Heart right ventricle (tissue), 16 donors: ENCODE measurements at regions of chr18 and their contacts with region 1.

Region 1: DNA sequence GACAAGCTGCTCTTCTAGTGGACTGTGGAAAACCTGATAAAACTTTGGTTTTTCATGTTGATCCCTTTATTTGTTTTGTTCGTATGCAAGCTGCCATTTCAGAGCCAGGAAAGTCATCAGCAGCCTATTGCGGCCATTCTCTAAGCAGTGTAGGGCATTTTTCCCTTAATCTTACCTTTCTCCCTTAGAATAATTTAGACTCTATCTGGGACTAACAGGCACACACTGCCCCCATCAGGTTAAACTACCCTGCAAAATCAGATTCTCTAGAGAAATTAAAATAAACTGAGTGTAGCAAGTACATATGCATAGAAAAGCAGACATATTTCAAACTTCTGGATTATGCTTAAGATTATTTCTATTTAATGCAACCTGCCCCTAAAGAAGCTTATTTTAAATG is 347.5 kb downstream of the METTL4 start:
- DNase-seq: peak in 1 of 2 donors; percentile 26
- ATAC-seq: peak in 1 of 8 donors; percentile 51
- H3K4me3 ChIP-seq: peak overlapping the region in 6 of 10 donors; percentile 6 to 40 (median 29)
- H3K27ac ChIP-seq: no peak overlapping the region
- H3K4me1 ChIP-seq: no peaks in the 10 kb centered on the region
- H3K27me3 ChIP-seq: peaks cover 0 to 7% (median 0%) of the 10 kb centered on the region in 7 donors
- CTCF ChIP-seq: peak; percentile 23 to 70 (median 58)

Region 2: GRCh38 chr18:2111456-2111855 is 112.4 kb before region 1 on chr18:
- intact Hi-C with region 1: loop called in 6 of 10 experiments (anchors 5 to 10 kb)
- DNase-seq: no peak
- ATAC-seq: no peak
- H3K4me3 ChIP-seq: no peak overlapping the region
- H3K27ac ChIP-seq: no peak overlapping the region
- H3K4me1 ChIP-seq: no peaks in the 10 kb centered on the region
- H3K27me3 ChIP-seq: peaks cover 0 to 14% (median 0%) of the 10 kb centered on the region in 7 donors
- CTCF ChIP-seq: no peak

Region 3: DNA sequence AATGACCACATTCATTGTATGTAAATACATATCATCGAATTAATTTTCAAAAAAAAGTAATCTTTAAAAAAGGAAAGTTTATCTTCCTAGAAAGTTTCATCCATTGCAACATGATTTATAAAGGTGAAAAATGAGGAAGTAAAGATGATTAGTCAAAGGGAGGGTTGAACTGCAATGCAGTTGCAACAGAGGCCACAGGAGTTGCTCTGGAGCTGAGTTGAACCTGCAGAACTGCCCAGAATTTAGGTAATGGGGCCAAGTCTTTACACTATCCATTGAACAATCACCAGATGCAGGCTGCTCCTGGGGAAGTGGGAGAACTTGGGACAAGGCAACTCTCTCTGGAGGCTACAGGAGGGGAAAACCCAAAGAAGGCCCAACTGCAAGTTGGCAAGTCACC is 43.3 kb before region 1 on chr18:
- intact Hi-C with region 1: no loop called
- DNase-seq: no peak
- ATAC-seq: no peak
- H3K4me3 ChIP-seq: no peak overlapping the region
- H3K27ac ChIP-seq: no peak overlapping the region
- H3K4me1 ChIP-seq: no peaks in the 10 kb centered on the region
- H3K27me3 ChIP-seq: peaks cover 0 to 4% (median 0%) of the 10 kb centered on the region in 7 donors
- CTCF ChIP-seq: no peak